ENCODE measurements at regions of chr3 and their contacts with region 1.

Region 1: GRCh38 chr3:25558111-25558510 is 106.6 kb downstream of the TOP2B start:
- DNase-seq: no peak
- ATAC-seq: peak; percentile 34

Region 2: GRCh38 chr3:25468866-25469319 is 89.2 kb before region 1 on chr3:
- intact Hi-C with region 1: loop called (anchors 5 kb)
- DNase-seq: peak; percentile 81
- ATAC-seq: peak; percentile 89

Region 3: GRCh38 chr3:25515171-25515570 is 42.9 kb before region 1 on chr3:
- intact Hi-C with region 1: loop called (anchors 5 kb)
- DNase-seq: no peak
- ATAC-seq: no peak

Measured in Right ventricle myocardium inferior (tissue), 1 donor.